ENCODE measurements at regions of chr10 and their contacts with region 1.

Region 1: DNA sequence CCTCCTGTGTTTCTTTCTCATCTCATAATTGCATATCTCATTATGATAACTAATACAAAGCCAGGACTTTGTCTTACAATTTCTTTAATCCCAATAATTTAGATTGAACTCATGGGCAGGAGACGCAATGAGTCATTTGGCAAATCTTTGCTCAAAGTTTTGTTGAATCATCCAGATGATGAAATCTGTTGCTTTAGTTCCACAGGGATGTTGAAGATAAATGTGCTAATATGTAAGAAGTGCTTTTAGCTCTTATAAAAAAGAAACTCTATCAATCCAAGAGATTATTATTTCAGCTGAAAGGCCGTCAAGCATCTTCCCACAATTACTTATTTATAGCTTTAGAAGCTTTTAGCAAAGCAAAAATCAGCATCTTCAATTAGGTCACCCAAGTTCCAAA is 36.7 kb upstream of the ANK3 start:
- DNase-seq: peak; percentile 26
- H3K4me3 Mint-ChIP-seq: peak overlapping the region; percentile 10
- H3K27ac Mint-ChIP-seq: peak overlapping the region; percentile 93
- H3K4me1 Mint-ChIP-seq: peaks cover 73% of the 10 kb centered on the region
- H3K27me3 Mint-ChIP-seq: no peaks in the 10 kb centered on the region
- CTCF ChIP-seq: no peak

Region 2: DNA sequence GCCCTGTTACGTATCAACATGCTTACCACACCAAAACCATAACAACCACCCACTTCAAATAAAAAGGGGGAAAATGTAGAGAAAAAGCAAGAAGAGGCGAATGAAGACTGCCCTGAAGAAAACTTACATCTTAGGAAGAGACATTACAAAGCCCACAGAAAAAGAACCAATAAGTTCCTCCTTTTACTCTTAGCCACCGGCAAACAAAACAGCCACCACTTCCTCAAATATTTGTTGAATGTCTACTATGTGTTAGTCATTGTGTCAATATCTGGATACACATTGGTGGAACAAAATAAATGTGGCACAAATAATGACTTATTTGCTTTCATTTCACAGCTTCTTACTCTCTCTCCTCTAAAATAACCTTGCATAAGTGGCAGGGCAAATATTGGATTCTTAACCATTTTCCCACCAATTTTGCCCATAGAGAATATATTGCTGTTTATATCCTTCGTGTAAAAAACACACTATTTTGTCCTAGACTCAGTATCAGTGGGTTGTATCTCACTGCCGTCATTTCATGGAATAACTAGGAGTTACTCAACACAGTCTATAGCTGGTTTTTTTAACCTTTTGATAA is 143.5 kb before region 1 on chr10:
- CTCF ChIA-PET with region 1: no interaction called
- intact Hi-C with region 1: loop called (anchors 5 kb)
- DNase-seq: peak; percentile 49
- H3K4me3 Mint-ChIP-seq: peak overlapping the region; percentile 57
- H3K27ac Mint-ChIP-seq: peak overlapping the region; percentile 68
- H3K4me1 Mint-ChIP-seq: peaks cover 53% of the 10 kb centered on the region
- H3K27me3 Mint-ChIP-seq: no peaks in the 10 kb centered on the region
- CTCF ChIP-seq: no peak

Region 3: GRCh38 chr10:60536529-60537114 is 110.2 kb after region 1 on chr10:
- CTCF ChIA-PET with region 1: no interaction called
- intact Hi-C with region 1: no loop called
- DNase-seq: no peak
- H3K4me3 Mint-ChIP-seq: no peak overlapping the region
- H3K27ac Mint-ChIP-seq: no peak overlapping the region
- H3K4me1 Mint-ChIP-seq: peaks cover 13% of the 10 kb centered on the region
- H3K27me3 Mint-ChIP-seq: no peaks in the 10 kb centered on the region
- CTCF ChIP-seq: no peak